Activated CD4-positive, alpha-beta T cell treated with anti-CD3 and anti-CD28 coated beads, Interleukin-2, amount 10 ng/mL, durations not matched to agents 24 days and 14 days (primary cell): ENCODE measurements at regions of chr4 and their contacts with region 1.

Region 1: DNA sequence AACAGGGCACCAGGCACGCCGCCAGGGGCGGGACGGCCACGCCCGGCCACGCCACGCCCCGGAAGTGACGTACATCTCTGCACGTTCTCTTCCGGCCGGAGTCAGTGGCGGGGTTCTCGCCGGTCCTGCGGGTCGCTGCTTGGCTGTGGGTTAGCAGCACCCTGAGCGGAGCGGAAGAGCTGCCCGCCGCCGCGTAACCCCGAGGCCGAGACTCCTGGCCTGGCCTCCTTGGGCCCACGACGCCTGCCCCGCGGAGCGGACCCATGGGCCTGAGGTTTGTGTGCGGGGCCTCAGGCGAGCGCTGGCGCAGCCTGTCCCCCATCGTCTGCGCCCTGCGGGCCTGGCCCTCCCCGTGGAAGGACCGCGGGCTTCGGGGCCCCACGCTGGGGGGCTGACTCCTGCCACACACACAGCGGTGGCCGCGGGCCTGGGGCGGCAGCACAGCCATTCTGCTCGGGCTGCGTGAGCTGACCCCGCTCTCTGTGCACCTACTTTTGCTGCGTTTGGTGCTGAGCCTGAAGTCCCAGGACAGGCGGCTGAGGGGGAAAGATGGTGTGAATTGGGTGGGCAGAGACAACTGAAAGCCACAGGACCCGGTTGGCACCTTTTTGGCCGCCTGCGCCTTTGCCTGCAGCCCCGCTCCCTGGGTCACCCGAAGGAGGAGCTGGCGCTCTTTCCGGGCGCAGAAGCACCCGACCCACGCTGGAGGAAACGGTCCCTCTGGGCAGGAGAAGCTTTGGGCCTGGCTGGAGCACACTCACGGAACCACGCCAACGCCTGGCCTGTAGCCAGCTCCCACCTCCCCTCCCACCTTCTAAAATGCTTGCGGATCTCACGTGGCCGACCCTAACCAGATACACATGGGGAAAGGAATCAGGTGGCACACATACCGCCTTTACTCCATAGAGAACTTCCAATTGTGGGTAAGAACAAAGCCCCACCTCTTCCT is 28.1 kb downstream of the NOP14 start:
- DNase-seq: peak; percentile 99
- H3K4me3 Mint-ChIP-seq: peak overlapping the region; percentile 90
- H3K27ac Mint-ChIP-seq: peak overlapping the region; percentile 93
- H3K4me1 Mint-ChIP-seq: peaks cover 42% of the 10 kb centered on the region
- H3K27me3 Mint-ChIP-seq: no peaks in the 10 kb centered on the region

Region 2: DNA sequence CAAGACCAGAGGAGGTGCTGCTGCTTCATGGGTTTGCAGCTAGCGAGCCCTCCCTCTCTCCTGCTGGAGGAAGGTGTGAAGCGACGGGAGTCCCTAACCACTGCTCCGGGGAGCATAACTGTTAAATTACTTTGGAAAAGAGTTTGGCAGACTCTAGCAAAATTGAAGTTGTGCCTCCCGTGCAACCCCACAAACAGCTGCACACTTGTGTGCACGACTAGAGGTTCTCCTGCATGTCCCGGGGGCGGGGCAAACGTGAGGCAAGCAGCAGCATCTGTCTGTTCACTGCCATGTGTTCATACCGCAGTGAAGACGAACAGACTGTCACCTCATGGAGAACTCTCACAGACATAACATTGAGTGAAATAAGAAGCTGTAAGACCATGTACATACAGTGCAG is 213.5 kb before region 1 on chr4:
- intact Hi-C with region 1: no loop called
- DNase-seq: no peak
- H3K4me3 Mint-ChIP-seq: no peak overlapping the region
- H3K27ac Mint-ChIP-seq: peak overlapping the region; percentile 25
- H3K4me1 Mint-ChIP-seq: peaks cover 10% of the 10 kb centered on the region
- H3K27me3 Mint-ChIP-seq: no peaks in the 10 kb centered on the region

Region 3: DNA sequence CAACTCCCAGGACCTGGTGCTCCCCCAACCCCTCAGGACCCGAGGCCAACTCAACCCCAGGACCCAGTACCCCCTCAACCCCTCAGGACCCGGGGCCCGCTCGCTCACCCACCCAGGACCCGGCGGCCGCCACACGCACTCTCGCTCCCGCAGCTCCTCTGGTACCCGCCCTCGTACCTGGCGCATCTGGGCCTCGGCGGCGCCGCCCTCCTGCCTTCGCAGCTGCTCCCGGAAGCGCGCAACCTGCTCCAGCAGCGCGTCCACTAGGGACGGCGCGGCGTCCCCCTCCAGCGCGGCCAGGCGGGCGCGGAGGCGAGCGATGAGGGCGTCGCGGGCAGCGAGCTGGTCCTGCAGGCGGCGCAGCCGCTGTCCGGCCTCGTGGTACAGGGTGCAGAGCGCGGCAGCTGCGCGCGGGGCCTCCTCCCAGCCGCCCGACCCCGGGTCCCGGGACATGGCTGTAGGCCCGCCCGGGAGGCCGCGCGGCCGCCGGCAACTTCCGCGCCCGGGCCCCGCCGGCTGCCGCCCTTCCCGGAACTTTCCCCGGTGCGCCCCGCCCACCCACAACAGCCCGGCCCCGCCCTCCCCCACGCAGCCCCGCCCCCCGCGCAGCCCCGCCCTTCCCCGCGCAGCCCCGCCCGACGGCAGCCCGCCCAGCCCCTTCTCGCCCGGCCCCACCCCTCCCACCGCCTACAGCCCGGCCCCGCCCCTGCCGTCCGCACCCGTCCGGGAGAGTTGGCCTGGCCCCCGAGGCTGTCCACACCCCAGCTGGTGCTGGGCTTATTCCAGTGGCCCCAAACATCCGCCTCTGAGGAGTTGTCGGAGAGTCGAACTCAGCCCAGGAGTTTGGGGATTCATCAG is 179.0 kb before region 1 on chr4 and contains the start of gene TNIP2:
- intact Hi-C with region 1: loop called (anchors 2 kb)
- DNase-seq: peak; percentile 93
- H3K4me3 Mint-ChIP-seq: peak within 1 kb of the TSS; percentile 90
- H3K27ac Mint-ChIP-seq: peak within 1 kb of the TSS; percentile 81
- H3K4me1 Mint-ChIP-seq: peaks cover 31% of the 10 kb centered on the region
- H3K27me3 Mint-ChIP-seq: no peaks in the 10 kb centered on the region
- total RNA-seq, gene TNIP2: 98.7 and 99.6 TPM in 2 replicates

Region 4: DNA sequence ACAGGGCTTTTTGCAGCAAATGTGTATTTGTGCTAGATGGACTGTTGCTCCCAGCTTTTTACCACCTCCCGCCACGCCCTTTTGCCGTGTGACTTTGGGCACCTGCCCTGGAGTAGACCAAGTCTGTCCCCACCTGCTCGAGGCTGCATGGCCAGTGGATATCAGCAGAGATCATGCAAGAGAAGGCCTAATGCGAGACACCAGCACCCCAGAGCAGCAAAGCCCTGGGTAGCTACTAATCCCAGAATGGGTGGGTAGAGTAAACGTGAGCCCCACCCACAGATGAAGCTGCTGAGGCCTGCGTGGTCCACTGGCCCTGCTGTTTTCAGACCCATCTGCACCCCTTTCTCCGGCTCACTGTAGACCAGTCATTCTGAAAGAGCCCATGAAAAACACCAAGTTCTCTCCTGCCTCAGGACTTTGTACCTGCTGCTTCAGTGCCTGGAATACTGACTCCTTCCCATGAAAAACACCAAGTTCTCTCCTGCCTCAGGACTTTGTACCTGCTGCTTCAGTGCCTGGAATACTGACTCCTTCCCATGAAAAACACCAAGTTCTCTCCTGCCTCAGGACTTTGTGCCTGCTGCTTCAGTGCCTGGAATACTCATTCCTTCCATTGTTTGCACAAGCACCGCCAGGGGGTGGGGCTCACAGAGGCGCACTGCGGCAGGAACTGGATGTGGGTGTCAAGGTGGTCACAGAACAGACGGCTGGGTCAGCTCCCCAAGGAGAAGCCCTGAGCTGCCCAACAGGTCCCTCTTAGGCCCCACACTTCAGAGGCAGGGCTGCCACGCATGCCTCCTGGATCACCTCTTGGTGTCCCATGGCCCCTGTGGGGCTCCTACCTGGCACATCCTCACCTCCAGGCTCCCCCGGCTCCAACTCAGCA is 173.8 kb before region 1 on chr4:
- intact Hi-C with region 1: loop called (anchors 1 kb)
- DNase-seq: peak; percentile 69
- H3K4me3 Mint-ChIP-seq: no peak overlapping the region
- H3K27ac Mint-ChIP-seq: peak overlapping the region; percentile 67
- H3K4me1 Mint-ChIP-seq: peaks cover 11% of the 10 kb centered on the region
- H3K27me3 Mint-ChIP-seq: no peaks in the 10 kb centered on the region

Region 5: DNA sequence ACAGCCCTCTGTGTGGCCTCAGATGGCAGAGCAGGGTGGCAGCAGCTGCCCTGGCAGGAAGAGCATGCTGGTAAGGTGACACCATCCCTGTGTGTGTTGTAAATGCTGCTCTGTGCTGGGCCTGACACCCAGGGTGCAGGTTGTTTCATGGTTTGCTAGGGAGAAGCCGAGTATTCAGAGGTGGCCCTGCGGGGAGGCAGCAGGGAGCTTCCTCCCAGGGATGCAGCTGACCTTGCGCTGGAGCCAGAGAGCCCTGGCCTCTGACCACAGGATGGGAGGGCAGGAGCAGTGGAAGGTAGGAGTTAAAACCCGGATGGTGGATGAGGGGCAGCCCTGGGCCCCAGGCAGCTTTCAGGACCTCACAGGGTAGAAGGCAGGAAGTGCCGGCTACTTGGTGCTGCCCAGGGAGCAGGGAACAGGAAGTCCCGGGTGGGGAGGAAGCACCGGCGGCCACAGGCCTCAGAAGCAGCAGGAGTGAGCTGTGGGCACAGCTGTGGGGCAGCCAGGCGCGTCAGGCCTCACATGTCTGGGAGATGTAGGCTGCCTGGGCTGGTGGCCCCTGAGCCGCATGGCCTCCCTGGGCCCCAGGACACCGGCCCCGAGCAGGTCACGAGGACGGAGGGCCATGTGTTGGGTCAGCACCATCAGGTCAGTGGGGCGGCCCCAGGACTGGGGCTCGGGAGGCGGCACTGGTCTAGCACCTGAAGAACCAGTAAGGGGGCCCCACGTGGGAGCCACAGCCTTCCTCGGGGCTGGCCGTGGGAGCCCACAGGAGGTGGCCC is 123.1 kb before region 1 on chr4:
- intact Hi-C with region 1: loop called (anchors 5 kb)
- DNase-seq: peak; percentile 90
- H3K4me3 Mint-ChIP-seq: peak overlapping the region; percentile 89
- H3K27ac Mint-ChIP-seq: peak overlapping the region; percentile 96
- H3K4me1 Mint-ChIP-seq: peaks cover 52% of the 10 kb centered on the region
- H3K27me3 Mint-ChIP-seq: no peaks in the 10 kb centered on the region

Region 6: DNA sequence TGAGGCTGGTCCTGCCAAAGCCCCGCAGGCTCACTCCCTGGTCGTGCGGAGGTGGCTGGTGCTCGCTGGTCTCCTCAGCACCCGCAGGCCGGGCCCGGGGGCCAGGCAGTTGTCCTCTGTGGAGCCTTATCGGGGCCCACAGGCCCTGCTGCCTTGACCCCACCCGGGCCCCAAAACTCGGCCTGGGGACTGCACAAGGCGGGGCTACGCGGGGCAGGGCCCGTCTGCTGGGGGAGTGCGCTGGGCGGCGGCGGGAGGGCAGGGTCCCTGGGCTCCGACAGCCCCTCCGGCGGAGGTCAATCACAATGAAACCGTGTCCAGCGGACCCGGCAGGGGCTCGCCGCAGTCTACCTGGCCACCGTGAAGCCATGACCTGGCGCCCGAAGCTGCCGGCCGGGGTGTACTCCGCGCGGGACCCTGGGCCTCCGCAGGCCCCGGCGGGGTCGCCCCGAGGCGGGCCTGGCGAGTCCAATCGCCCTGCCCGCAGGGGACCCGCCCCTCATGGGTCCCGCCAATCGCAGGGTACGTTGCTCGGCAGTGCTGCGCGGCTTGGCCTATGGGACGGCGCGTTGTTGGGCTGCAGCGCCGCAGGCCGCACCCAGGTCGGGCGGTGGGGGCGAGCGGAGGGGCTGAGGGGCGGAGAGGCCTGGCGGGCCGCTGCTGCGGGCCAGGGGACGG is 91.7 kb before region 1 on chr4 and contains the start of gene ADD1:
- intact Hi-C with region 1: loop called (anchors 5 kb)
- DNase-seq: peak; percentile 100
- H3K4me3 Mint-ChIP-seq: peak within 1 kb of the TSS; percentile 91
- H3K27ac Mint-ChIP-seq: peak within 1 kb of the TSS; percentile 92
- H3K4me1 Mint-ChIP-seq: peaks cover 41% of the 10 kb centered on the region
- H3K27me3 Mint-ChIP-seq: no peaks in the 10 kb centered on the region
- total RNA-seq, gene ADD1: 187 and 198 TPM in 2 replicates

Region 7: GRCh38 chr4:2954358-2955185 is 19.5 kb after region 1 on chr4:
- intact Hi-C with region 1: loop called (anchors 1 kb)
- DNase-seq: peak; percentile 86
- H3K4me3 Mint-ChIP-seq: peak overlapping the region; percentile 75
- H3K27ac Mint-ChIP-seq: peak overlapping the region; percentile 99
- H3K4me1 Mint-ChIP-seq: peaks cover 63% of the 10 kb centered on the region
- H3K27me3 Mint-ChIP-seq: no peaks in the 10 kb centered on the region

Region 8: GRCh38 chr4:3047464-3048286 is 112.6 kb after region 1 on chr4:
- intact Hi-C with region 1: loop called (anchors 1 kb)
- DNase-seq: peak; percentile 95
- H3K4me3 Mint-ChIP-seq: peak overlapping the region; percentile 60
- H3K27ac Mint-ChIP-seq: peak overlapping the region; percentile 68
- H3K4me1 Mint-ChIP-seq: peaks cover 38% of the 10 kb centered on the region
- H3K27me3 Mint-ChIP-seq: peaks cover 10% of the 10 kb centered on the region